Dorsolateral prefrontal cortex (tissue), 120 donors: ENCODE measurements at regions of chr22 and their contacts with region 1.

Region 1: DNA sequence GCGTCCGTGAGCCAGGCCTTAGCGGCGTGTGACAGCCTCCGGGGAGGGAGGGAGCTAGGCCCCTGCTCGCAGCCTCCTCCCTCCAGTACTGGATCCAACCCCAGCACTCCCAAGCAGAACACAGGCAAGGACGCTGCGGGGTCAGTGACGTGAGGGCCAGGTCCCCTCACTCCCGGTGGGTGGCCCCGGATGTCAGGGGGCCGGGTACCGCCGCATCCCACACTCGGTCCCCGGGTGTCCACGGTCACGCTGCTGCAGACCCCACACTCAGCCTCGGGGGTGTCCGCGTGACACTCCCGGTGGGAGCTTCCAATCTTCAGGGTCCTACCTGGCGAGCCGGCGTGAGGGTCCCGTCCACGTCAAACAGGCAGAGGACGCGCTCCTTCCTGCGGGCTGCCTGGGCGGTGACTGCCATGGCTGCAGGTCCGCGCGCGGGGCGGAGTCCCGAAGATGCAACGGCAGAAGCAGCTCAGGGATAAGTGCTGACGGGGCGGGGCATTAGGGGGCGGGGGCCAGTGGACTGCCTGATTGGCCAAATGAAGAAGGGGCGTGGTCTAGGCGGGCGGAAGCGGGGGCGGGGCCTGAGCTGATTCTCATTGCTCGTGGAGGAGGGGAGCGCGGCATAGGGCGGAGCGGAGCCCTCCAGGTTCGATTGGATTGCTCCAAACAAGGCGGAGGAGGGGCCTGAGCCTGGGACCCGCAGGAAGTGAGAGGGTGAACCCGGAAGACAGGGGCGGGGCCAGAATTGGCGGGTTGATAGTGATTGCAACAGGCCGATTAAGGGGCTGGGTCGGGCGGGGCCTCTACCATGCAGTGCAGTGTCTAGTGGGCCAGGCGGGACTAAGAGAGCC is at the start of gene PMM1:
- DNase-seq: peak; percentile 99 to 100 (median 100)
- H3K4me3 ChIP-seq: peak within 1 kb of the TSS; percentile 69 to 100 (median 94)
- H3K27ac ChIP-seq: peak within 1 kb of the TSS in 56 of 59 donors; percentile 31 to 93 (median 79)
- H3K27me3 ChIP-seq: no peaks in the 10 kb centered on the region
- CTCF ChIP-seq: peak in 12 of 56 donors; percentile 9 to 41 (median 24)
- total RNA-seq, gene PMM1: 29.3 to 80.7 (median 56.1) TPM

Region 2: GRCh38 chr22:41543854-41544670 is 45.6 kb before region 1 on chr22 and contains the start of gene POLR3H:
- intact Hi-C with region 1: loop called (anchors 2 kb)
- DNase-seq: peak; percentile 96 to 100 (median 99)
- H3K4me3 ChIP-seq: peak within 1 kb of the TSS; percentile 57 to 95 (median 80)
- H3K27ac ChIP-seq: peak within 1 kb of the TSS; percentile 54 to 98 (median 88)
- H3K27me3 ChIP-seq: no peaks in the 10 kb centered on the region
- CTCF ChIP-seq: peak in 55 of 56 donors; percentile 35 to 78 (median 65)
- total RNA-seq, gene POLR3H: 47.5 to 93.1 (median 62.0) TPM

Region 3: GRCh38 chr22:41621099-41621910 is 31.7 kb after region 1 on chr22 and contains the start of gene XRCC6:
- intact Hi-C with region 1: loop called in 1 of 2 experiments (anchors 1 kb)
- DNase-seq: peak; percentile 99 to 100 (median 100)
- H3K4me3 ChIP-seq: peak within 1 kb of the TSS; percentile 75 to 100 (median 95)
- H3K27ac ChIP-seq: peak within 1 kb of the TSS; percentile 70 to 100 (median 96)
- H3K27me3 ChIP-seq: no peaks in the 10 kb centered on the region
- CTCF ChIP-seq: peak in 18 of 56 donors; percentile 9 to 44 (median 20)
- total RNA-seq, gene XRCC6: 83.9 to 180 (median 142) TPM

Region 4: GRCh38 chr22:42016101-42016500 is 426.5 kb after region 1 on chr22:
- intact Hi-C with region 1: no loop called
- DNase-seq: no peak
- H3K4me3 ChIP-seq: no peak overlapping the region
- H3K27ac ChIP-seq: no peak overlapping the region
- H3K27me3 ChIP-seq: no peaks in the 10 kb centered on the region
- CTCF ChIP-seq: no peak